ENCODE measurements at regions of chr17 and their contacts with region 1.

Region 1: GRCh38 chr17:46154151-46154816 is 38.9 kb downstream of the KANSL1 start:
- DNase-seq: peak in 1 of 2 donors; percentile 44
- ATAC-seq: peak in 2 of 3 donors; percentile 45 to 48
- H3K4me3 ChIP-seq: no peak overlapping the region
- H3K4me3 Mint-ChIP-seq: peak overlapping the region; percentile 43
- H3K27ac ChIP-seq: peak overlapping the region; percentile 6
- H3K27ac Mint-ChIP-seq: peak overlapping the region; percentile 61 to 73
- H3K4me1 ChIP-seq: peaks cover 37% of the 10 kb centered on the region
- H3K4me1 Mint-ChIP-seq: peaks cover 76 to 82% of the 10 kb centered on the region in 2 donors
- H3K27me3 ChIP-seq: no peaks in the 10 kb centered on the region
- H3K27me3 Mint-ChIP-seq: no peaks in the 10 kb centered on the region
- CTCF ChIP-seq: no peak

Region 2: GRCh38 chr17:45889579-45889978 is 264.7 kb before region 1 on chr17:
- intact Hi-C with region 1: no loop called
- DNase-seq: no peak
- ATAC-seq: no peak
- H3K4me3 ChIP-seq: no peak overlapping the region
- H3K4me3 Mint-ChIP-seq: no peak overlapping the region
- H3K27ac ChIP-seq: no peak overlapping the region
- H3K27ac Mint-ChIP-seq: no peak overlapping the region
- H3K4me1 ChIP-seq: peaks cover 5% of the 10 kb centered on the region
- H3K4me1 Mint-ChIP-seq: peaks cover 5 to 6% of the 10 kb centered on the region in 2 donors
- H3K27me3 ChIP-seq: no peaks in the 10 kb centered on the region
- H3K27me3 Mint-ChIP-seq: peaks cover 6 to 13% of the 10 kb centered on the region in 2 donors
- CTCF ChIP-seq: no peak

Region 3: GRCh38 chr17:46044286-46044928 is 109.9 kb before region 1 on chr17:
- intact Hi-C with region 1: no loop called
- DNase-seq: peak; percentile 27 to 78
- ATAC-seq: peak; percentile 55 to 86 (median 78)
- H3K4me3 ChIP-seq: no peak overlapping the region
- H3K4me3 Mint-ChIP-seq: no peak overlapping the region
- H3K27ac ChIP-seq: no peak overlapping the region
- H3K27ac Mint-ChIP-seq: peak overlapping the region; percentile 70 to 76
- H3K4me1 ChIP-seq: no peaks in the 10 kb centered on the region
- H3K4me1 Mint-ChIP-seq: peaks cover 16 to 20% of the 10 kb centered on the region in 2 donors
- H3K27me3 ChIP-seq: no peaks in the 10 kb centered on the region
- H3K27me3 Mint-ChIP-seq: no peaks in the 10 kb centered on the region
- CTCF ChIP-seq: peak; percentile 74

Region 4: DNA sequence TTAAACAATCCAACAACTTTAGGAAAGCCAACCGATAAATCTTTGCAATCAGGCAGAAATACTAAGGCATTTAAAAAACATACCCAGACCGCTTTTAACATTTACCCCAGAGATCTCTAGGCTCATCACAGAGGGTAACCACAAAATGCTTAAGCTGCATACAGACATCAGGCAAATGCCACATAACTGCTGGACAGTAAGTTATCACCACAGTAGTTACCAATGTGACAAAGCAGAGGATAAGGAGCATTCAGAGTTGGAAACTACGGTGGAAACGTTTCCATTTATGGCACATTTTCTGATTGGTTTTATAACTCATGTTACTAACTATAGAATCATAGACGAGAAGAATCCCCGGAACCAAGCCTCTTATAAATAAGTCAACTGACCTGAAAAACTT is 38.6 kb before region 1 on chr17:
- intact Hi-C with region 1: loop called (anchors 5 kb)
- DNase-seq: no peak
- ATAC-seq: peak in 2 of 3 donors; percentile 54 to 73
- H3K4me3 ChIP-seq: no peak overlapping the region
- H3K4me3 Mint-ChIP-seq: peak overlapping the region; percentile 56
- H3K27ac ChIP-seq: no peak overlapping the region
- H3K27ac Mint-ChIP-seq: peak overlapping the region; percentile 73 to 83
- H3K4me1 ChIP-seq: peaks cover 7% of the 10 kb centered on the region
- H3K4me1 Mint-ChIP-seq: peaks cover 81 to 87% of the 10 kb centered on the region in 2 donors
- H3K27me3 ChIP-seq: no peaks in the 10 kb centered on the region
- H3K27me3 Mint-ChIP-seq: no peaks in the 10 kb centered on the region
- CTCF ChIP-seq: no peak

Region 5: DNA sequence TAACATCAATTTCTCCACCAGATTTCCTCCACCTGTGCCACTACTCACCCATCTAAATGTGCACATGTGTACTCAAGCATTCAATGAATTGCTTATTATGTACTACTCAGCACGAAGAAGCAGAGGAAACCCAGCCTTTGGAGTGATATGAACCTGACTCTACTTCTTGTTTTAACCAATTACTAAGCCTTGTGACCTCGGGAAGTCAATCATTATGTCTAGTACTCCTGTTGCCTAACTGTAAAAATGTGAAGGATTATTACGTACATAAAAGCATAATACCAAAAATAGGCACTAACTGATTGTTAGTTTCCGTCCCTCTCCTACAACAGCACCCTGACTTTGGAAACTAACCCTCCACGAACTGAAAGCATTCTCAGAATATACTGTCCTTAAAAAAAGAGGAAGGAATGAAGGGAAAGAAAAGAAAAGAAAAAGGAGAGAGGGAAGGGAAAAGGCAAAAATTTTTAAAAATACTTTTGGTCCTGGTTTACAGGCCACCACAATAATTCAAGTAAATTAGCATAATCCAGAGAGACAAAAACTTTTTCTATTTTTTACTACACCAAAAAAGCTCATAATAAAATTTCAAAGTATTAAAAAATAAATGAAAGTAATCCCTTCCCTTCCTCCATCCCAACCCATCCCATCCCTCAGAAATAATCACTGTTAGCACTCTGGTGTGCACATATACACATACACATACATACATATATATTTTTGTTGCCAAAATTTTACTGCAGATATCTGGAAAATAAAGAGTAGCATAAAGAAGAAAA is 14.7 kb before region 1 on chr17:
- intact Hi-C with region 1: loop called (anchors 2 kb)
- DNase-seq: no peak
- ATAC-seq: no peak
- H3K4me3 ChIP-seq: no peak overlapping the region
- H3K4me3 Mint-ChIP-seq: peak overlapping the region; percentile 26
- H3K27ac ChIP-seq: no peak overlapping the region
- H3K27ac Mint-ChIP-seq: peak overlapping the region; percentile 32 to 71
- H3K4me1 ChIP-seq: peaks cover 11% of the 10 kb centered on the region
- H3K4me1 Mint-ChIP-seq: peaks cover 82 to 92% of the 10 kb centered on the region in 2 donors
- H3K27me3 ChIP-seq: no peaks in the 10 kb centered on the region
- H3K27me3 Mint-ChIP-seq: no peaks in the 10 kb centered on the region
- CTCF ChIP-seq: no peak

Region 6: DNA sequence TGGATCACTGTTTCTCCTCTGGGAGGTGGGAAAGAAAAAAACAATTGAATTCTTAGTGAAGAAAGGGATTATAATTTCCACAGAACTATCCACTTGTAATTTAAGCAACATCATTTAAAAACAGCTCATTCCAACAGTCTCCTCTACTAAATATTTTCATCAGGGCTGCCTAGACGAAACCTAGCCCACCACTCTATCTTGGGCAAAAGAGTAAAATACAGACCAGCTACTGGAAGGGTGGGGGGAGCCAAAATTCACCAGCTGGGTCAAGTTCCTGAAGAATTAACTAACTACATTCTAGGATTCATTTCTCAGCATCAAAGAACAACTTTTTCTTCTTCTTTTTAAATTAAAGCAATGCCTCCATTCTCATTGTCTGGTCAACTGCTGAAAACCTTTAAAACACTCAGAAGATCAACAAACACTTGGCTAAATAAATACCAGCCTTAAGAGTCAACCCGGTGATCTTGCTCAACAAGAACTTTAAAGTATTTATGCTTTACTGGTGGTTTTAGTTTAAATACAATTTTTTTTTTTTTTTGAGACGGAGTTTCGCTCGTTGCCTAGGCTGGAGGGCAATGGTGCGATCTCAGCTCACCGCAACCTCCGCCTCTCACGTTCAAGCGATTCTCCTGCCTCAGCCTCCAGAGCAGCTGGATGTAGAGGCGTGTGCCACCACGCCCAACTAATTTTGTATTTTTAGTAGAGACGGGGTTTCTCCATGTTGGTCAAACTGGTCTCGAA is 13.7 kb after region 1 on chr17:
- intact Hi-C with region 1: no loop called
- DNase-seq: no peak
- ATAC-seq: no peak
- H3K4me3 ChIP-seq: no peak overlapping the region
- H3K4me3 Mint-ChIP-seq: peak overlapping the region; percentile 38
- H3K27ac ChIP-seq: no peak overlapping the region
- H3K27ac Mint-ChIP-seq: peak overlapping the region; percentile 39 to 83
- H3K4me1 ChIP-seq: peaks cover 7% of the 10 kb centered on the region
- H3K4me1 Mint-ChIP-seq: peaks cover 73 to 83% of the 10 kb centered on the region in 2 donors
- H3K27me3 ChIP-seq: no peaks in the 10 kb centered on the region
- H3K27me3 Mint-ChIP-seq: no peaks in the 10 kb centered on the region
- CTCF ChIP-seq: no peak

Measured in natural killer cell (primary cell).